ENCODE measurements at regions of chr17 and their contacts with region 1.

Region 1: DNA sequence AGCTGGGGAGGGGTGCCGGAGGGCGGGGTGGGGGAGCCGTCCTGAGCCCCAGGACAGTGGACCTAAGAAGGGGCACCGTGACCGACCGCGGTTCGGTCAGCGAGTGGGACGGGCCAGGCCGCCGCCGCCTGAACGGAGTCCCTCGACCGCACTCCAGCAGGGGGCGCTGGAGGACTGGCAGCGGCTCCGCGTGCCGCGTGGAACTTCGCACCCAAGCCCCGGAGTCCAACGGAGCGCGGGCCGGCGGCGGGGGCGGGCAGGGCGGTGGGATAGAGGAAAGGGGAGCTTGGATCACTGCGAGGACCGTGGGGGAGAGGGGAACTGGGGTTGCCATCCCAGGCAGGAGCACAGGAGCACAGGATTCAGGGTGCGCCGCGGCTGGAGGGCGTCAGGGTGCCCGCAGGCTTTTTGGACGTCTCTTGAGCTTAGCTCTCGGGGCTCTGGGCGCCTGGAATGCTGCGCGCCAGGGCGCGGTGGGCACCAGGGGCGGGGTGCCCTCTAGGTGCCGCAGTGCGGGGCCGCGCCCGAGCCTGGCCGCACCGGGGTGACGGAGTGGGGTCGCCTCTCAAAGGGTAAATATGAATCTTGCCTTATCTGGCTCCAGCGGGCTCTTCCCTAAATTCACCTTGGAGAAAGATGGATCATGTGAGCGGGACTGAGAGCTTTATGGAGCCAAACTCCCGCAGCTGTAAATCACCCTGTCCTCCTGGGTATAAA is 382 bp upstream of the OTOP2 start:
- DNase-seq: peak; percentile 64 to 92
- ATAC-seq: peak; percentile 49 to 80
- H3K4me3 ChIP-seq: peak overlapping the region; percentile 46
- H3K27ac ChIP-seq: peak overlapping the region; percentile 42 to 70; a peak in 5 of 6 replicates
- H3K4me1 ChIP-seq: peaks cover 19% of the 10 kb centered on the region; the same call in 2 of the 3 replicates
- CTCF ChIP-seq: peak; percentile 98
- EP300 ChIP-seq: no peak
- POLR2A ChIP-seq: no peak
- RAD21 ChIP-seq: peak; percentile 88 to 97

Region 2: GRCh38 chr17:74442670-74443515 is 480.8 kb before region 1 on chr17:
- CTCF ChIA-PET with region 1: no interaction called
- POLR2A ChIA-PET with region 1: no interaction called
- DNase-seq: peak in 1 of 2 experiments; percentile 66
- ATAC-seq: peak; percentile 58 to 70
- H3K4me3 ChIP-seq: no peak overlapping the region
- H3K27ac ChIP-seq: peak overlapping the region; percentile 16 to 61; a peak in 5 of 6 replicates
- H3K4me1 ChIP-seq: peaks cover 17% of the 10 kb centered on the region
- CTCF ChIP-seq: no peak
- EP300 ChIP-seq: no peak
- POLR2A ChIP-seq: no peak
- RAD21 ChIP-seq: no peak

Region 3: GRCh38 chr17:74502861-74503260 is 420.8 kb before region 1 on chr17:
- CTCF ChIA-PET with region 1: no interaction called
- POLR2A ChIA-PET with region 1: no interaction called
- DNase-seq: no peak
- ATAC-seq: no peak
- H3K4me3 ChIP-seq: no peak overlapping the region
- H3K27ac ChIP-seq: no peak overlapping the region
- H3K4me1 ChIP-seq: no peaks in the 10 kb centered on the region
- CTCF ChIP-seq: no peak
- EP300 ChIP-seq: no peak
- POLR2A ChIP-seq: no peak
- RAD21 ChIP-seq: no peak

Region 4: DNA sequence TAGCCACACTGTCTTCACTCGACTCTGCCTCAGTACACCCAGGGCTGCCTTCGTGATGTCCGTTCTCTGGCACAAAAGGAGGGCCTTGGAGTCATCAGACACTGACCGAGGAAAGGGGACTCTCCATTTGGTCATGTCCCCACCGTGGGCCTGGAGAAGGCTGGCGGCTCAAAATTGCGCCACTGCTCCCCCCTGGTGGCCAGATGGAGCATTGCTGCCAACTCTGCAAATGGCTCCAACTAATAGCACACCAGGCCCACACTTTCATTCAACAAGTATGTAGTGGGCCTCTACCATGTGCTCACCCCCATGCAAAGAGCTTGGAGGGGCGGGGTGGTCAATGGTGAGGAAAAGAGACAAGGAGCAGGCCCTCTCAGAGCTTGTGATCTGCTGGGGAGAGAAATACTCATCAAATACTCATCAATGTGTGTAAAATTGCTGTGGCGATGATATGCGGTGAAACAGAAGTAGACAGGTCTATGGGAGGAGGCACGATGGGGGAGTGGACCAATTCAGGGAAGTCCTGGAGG is 58.8 kb before region 1 on chr17:
- CTCF ChIA-PET with region 1: interaction called, 10 read pairs
- POLR2A ChIA-PET with region 1: no interaction called
- DNase-seq: peak; percentile 78 to 85
- ATAC-seq: peak; percentile 49 to 74
- H3K4me3 ChIP-seq: no peak overlapping the region
- H3K27ac ChIP-seq: no peak overlapping the region
- H3K4me1 ChIP-seq: peaks cover 38% of the 10 kb centered on the region
- CTCF ChIP-seq: peak; percentile 77
- EP300 ChIP-seq: no peak
- POLR2A ChIP-seq: no peak
- RAD21 ChIP-seq: peak; percentile 76 to 85

Region 5: DNA sequence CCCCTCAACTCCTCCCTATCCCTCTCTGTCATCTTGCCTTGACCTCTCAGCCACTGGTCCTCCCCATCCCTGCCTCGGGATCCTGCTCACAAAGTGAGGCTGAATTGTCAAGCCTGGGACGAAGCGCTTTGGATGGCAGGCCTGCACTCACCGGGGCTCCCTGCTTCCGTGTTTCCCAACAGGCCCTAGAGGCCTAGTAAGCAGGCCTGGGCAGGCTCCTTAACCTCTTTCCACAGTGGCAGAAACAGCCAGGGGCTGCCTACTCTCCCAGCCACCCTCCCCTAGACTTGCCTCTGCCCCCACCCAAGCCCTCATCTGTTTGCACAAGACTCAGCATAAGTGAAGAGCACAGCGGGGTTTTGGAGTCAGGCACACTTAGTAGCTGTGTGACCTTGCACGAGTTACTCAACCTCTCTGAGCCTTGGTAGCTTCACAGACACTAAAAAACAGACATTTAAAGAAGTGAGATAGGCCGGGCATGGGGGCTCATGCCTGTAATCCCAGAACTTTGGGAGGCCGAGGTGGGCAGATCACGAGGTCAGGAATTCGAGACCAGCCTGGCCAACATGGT is 25.2 kb before region 1 on chr17:
- CTCF ChIA-PET with region 1: interaction called, 44 read pairs
- POLR2A ChIA-PET with region 1: no interaction called
- DNase-seq: no peak
- ATAC-seq: no peak
- H3K4me3 ChIP-seq: no peak overlapping the region
- H3K27ac ChIP-seq: no peak overlapping the region
- H3K4me1 ChIP-seq: peaks cover under 1% of the 10 kb centered on the region; the same call in 1 of the 3 replicates
- CTCF ChIP-seq: no peak
- EP300 ChIP-seq: no peak
- POLR2A ChIP-seq: no peak
- RAD21 ChIP-seq: no peak

Region 6: DNA sequence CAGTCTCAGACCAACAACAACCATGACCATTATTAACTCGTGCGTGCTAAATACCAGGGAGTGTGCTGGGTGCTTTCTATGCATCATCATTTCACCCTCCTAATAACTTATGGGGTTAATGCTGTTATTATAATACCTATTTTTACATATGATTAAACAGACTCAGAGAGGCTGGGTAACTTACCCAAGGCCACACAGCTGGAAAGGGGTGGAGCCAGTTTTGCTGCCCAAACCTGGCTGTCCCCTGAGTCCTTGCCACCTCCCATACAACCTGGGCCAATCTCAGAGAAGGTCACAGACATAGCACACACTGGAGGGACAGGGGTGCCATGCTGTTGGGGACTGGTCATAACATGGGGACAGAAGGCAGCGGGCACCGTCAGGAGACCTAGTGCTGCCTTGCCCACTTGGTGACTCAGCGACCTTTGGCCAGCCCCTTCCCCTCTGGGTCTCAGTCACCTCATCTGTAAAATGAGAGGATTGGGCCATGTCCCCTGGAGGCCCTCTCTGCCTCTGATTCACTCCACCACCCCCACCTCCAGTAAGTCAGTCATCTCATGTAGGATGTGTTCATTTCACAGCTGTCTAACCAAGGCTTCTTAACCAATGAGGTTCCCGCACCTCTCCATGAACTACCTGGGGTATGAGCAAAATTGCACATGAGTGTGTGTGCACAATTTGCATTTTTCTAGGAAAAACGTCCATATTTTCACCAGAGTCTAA is 18.8 kb before region 1 on chr17:
- CTCF ChIA-PET with region 1: interaction called, 44 read pairs
- POLR2A ChIA-PET with region 1: no interaction called
- DNase-seq: no peak
- ATAC-seq: no peak
- H3K4me3 ChIP-seq: no peak overlapping the region
- H3K27ac ChIP-seq: no peak overlapping the region
- H3K4me1 ChIP-seq: no peaks in the 10 kb centered on the region
- CTCF ChIP-seq: no peak
- EP300 ChIP-seq: no peak
- POLR2A ChIP-seq: no peak
- RAD21 ChIP-seq: no peak

Region 7: GRCh38 chr17:74935585-74936469 is 12.1 kb after region 1 on chr17 and contains the start of gene OTOP3:
- CTCF ChIA-PET with region 1: interaction called, 1,448 read pairs
- POLR2A ChIA-PET with region 1: no interaction called
- DNase-seq: no peak
- ATAC-seq: no peak
- H3K4me3 ChIP-seq: no peak within 1 kb of the TSS
- H3K27ac ChIP-seq: no peak within 1 kb of the TSS
- H3K4me1 ChIP-seq: peaks cover 7% of the 10 kb centered on the region; the same call in 2 of the 3 replicates
- CTCF ChIP-seq: no peak
- EP300 ChIP-seq: no peak
- POLR2A ChIP-seq: no peak
- RAD21 ChIP-seq: no peak
- polyA plus RNA-seq, gene OTOP3: not detected in 2 replicates

Region 8: DNA sequence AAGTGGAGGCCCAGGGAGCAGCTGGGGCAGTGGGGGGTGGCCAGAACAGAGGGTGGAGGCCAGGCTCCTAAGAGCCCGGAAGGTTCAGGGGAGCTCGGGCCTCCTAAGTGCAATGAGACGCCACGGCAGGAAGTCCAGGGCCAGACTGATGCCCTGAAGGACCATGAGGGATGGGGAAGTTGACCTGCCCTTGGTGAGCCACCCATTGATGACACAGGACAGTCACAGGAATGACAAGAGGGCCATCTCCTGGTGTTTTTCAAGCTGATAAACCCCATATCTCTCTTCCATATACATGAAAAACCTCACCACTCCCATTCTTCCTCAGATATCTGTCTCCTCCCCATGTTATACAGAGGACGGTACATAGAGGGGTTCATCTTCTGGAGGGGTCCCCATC is 83.0 kb after region 1 on chr17:
- CTCF ChIA-PET with region 1: interaction called, 26 read pairs
- POLR2A ChIA-PET with region 1: interaction called, 4 read pairs
- DNase-seq: peak in 1 of 2 experiments; percentile 38
- ATAC-seq: peak in 1 of 2 experiments; percentile 26; a peak in 2 of 6 replicates
- H3K4me3 ChIP-seq: no peak overlapping the region
- H3K27ac ChIP-seq: no peak overlapping the region
- H3K4me1 ChIP-seq: peaks cover 5% of the 10 kb centered on the region
- CTCF ChIP-seq: 0 out of 3 replicates have a peak, but pooled peaks have one; percentile 13
- EP300 ChIP-seq: no peak
- POLR2A ChIP-seq: no peak
- RAD21 ChIP-seq: peak; percentile 33 to 57; a peak in 4 of 5 replicates

Measured in A549 (cell line).